ENCODE measurements at regions of chr1 and their contacts with region 1.

Region 1: DNA sequence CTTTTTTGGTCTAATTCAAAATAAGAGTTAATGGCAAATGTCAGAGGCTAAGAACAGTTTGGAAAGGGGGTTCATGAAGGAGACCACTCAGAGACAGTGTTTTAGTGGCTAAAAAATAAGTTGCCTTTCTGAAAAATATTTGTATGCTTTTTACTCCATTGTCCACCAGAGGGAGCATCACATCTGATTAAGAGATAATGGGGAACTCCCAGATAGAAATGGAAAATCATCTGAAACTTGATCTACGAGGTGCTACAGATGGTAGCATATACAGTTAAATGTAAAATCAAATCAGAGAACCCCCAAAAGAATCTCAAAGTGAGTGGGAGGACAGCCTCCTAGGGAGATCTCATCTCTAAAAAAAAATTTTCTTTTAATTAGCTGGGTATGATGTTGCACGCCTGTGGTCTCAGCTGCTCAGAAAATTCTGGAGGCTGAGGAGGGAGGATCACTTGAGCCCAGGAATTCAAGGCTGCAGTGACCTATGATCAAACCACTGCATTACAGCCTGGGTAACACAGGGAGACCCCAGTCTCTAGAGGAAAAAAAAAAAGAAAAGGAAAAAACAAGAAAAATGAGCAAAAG is 9.7 kb downstream of the SMYD3 start:
- DNase-seq: peak; percentile 48
- ATAC-seq: peak; percentile 52; the same call in 1 of the 2 replicates
- H3K4me3 ChIP-seq: no peak overlapping the region
- H3K27ac ChIP-seq: no peak overlapping the region
- H3K4me1 ChIP-seq: no peaks in the 10 kb centered on the region
- H3K27me3 ChIP-seq: no peaks in the 10 kb centered on the region
- CTCF ChIP-seq: peak; percentile 76

Region 2: DNA sequence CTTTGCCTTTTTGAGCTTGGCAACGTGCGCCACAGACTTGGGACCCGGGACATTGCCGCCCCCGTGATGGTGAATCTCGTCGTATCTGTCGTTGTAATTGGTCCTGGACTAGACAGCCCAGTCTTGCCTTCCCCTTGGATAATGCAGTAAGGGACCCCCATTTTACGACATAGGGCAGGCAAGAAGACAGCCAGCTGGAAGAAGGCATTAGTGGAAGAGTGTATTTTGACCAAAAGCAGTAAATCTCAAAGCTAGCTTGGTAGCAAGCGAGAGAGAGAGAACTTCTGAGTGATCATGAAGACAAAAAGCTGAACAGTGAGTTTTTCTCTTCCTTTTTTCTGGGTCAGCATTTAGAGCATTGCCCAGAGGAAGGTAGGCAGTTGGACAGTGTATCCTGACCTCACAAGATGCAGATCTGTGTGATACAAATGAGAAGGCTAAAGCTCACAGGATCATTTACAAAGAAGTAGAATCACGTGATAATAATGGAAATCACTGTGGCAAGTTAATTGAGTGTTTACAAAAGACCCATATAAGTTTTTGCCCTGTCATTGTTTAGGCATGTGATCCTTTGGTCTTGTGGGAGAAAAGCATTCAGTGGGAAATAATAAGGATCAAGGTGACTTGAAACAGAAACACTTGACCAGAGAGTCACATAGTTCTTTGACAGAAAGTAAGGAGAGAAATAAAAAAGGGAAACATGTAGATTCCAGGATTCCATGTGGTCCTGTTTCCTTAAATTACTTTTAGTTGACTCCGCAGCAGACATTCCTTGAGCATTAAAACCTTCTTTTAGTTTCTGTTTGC is 135.1 kb after region 1 on chr1:
- CTCF ChIA-PET with region 1: no interaction called
- POLR2A ChIA-PET with region 1: no interaction called
- in situ Hi-C with region 1: no loop called
- intact Hi-C with region 1: no loop called
- DNase-seq: no peak
- ATAC-seq: no peak
- H3K4me3 ChIP-seq: no peak overlapping the region
- H3K27ac ChIP-seq: no peak overlapping the region
- H3K4me1 ChIP-seq: no peaks in the 10 kb centered on the region
- H3K27me3 ChIP-seq: no peaks in the 10 kb centered on the region
- CTCF ChIP-seq: no peak

Region 3: DNA sequence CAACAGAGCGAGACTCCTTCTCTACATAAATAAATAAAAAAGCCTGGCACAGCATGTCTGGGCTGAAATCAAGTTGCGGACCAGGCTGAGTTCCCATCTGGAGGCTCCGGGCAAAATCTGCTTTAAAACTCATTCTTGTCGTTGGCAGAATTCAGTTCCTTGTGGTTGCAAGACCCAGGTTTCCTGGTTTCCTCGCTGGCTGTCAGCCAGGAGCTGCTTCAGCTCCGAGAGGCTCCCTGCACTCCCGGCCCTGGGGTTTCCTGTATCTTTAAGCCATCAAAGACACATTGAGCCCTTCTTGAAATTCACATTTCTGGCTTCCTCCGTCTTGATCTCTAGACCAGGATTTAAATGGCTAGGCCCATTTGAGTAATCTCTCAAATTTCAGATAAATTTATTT is 206.2 kb after region 1 on chr1:
- CTCF ChIA-PET with region 1: no interaction called
- POLR2A ChIA-PET with region 1: no interaction called
- in situ Hi-C with region 1: no loop called
- intact Hi-C with region 1: loop called (anchors 5 kb)
- DNase-seq: no peak
- ATAC-seq: no peak
- H3K4me3 ChIP-seq: no peak overlapping the region
- H3K27ac ChIP-seq: no peak overlapping the region
- H3K4me1 ChIP-seq: no peaks in the 10 kb centered on the region
- H3K27me3 ChIP-seq: no peaks in the 10 kb centered on the region
- CTCF ChIP-seq: no peak